ENCODE measurements at regions of chr7 and their contacts with region 1.

Region 1: DNA sequence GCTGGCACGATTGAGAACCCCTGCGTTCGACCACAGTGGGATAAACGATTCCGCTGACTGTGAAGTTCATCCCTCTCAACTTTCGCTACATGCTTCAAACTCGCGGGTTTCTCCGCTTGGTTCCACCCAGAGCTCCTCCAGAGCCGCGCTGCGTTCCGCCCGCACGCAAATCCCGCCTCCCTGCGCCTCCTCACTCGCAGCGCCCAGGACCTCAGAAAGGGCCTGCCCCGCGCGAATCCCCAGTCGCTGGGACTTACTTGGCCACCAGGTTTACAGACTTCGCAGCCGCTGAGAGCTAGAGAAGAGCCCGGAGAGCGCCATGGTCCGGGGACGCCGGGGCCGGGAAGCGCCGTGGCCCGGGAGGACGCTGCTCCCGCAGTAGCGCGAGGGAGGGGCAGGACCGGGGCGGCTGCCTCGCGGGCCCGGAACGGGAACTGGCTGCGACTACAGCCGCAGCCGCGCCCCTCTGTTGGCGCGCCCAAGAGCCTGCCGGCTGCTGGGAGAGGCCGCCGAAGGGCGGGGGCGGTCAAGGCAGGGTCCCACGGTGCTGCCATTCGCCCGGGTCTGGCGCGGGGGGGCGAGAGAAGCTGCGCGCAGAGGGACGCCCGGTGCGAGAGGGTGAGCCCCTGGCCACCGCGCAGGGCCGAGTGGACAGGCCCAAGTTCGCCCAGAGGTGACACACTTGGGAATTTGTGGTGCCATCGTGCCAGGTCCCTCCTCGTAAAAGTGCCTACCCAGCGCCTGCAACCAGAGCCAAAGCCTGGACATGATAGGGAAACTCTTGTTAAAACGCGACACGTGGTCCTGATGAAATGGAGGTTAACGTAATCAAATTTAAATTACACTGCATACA is at the start of gene NOD1:
- DNase-seq: peak; percentile 93
- H3K4me3 Mint-ChIP-seq: peak within 1 kb of the TSS; percentile 92
- H3K27ac Mint-ChIP-seq: peak within 1 kb of the TSS; percentile 93
- H3K4me1 Mint-ChIP-seq: peaks cover 45% of the 10 kb centered on the region
- H3K27me3 Mint-ChIP-seq: no peaks in the 10 kb centered on the region
- total RNA-seq, gene NOD1: 11.6 and 12.9 TPM in 2 replicates

Region 2: GRCh38 chr7:30504347-30505173 is 26.0 kb after region 1 on chr7 and contains the start of gene GGCT:
- intact Hi-C with region 1: loop called (anchors 1 kb)
- DNase-seq: peak; percentile 99
- H3K4me3 Mint-ChIP-seq: peak within 1 kb of the TSS; percentile 87
- H3K27ac Mint-ChIP-seq: peak within 1 kb of the TSS; percentile 84
- H3K4me1 Mint-ChIP-seq: peaks cover 44% of the 10 kb centered on the region
- H3K27me3 Mint-ChIP-seq: no peaks in the 10 kb centered on the region
- total RNA-seq, gene GGCT: 76.1 and 80.3 TPM in 2 replicates

Measured in activated CD4-positive, alpha-beta T cell treated with anti-CD3 and anti-CD28 coated beads, Interleukin-2, amount 10 ng/mL, durations not matched to agents 24 days and 14 days (primary cell).